Activated naive CD4-positive, alpha-beta T cell treated with anti-CD3 and anti-CD28 coated beads for 36 hours (primary cell): ENCODE measurements at regions of chr5 and their contacts with region 1.

Region 1: GRCh38 chr5:131382407-131383395 is 118.8 kb downstream of the CDC42SE2 start:
- DNase-seq: peak; percentile 61
- H3K4me3 Mint-ChIP-seq: peak overlapping the region; percentile 57
- H3K27ac Mint-ChIP-seq: peak overlapping the region; percentile 96
- H3K4me1 Mint-ChIP-seq: peaks cover 93% of the 10 kb centered on the region
- H3K27me3 Mint-ChIP-seq: no peaks in the 10 kb centered on the region

Region 2: GRCh38 chr5:131170540-131171275 is 212.0 kb before region 1 on chr5 and contains the start of gene LYRM7:
- CTCF ChIA-PET with region 1: no interaction called
- intact Hi-C with region 1: loop called (anchors 1 kb)
- DNase-seq: peak; percentile 98
- H3K4me3 Mint-ChIP-seq: peak within 1 kb of the TSS; percentile 99
- H3K27ac Mint-ChIP-seq: peak within 1 kb of the TSS; percentile 92
- H3K4me1 Mint-ChIP-seq: peaks cover 44% of the 10 kb centered on the region
- H3K27me3 Mint-ChIP-seq: no peaks in the 10 kb centered on the region
- total RNA-seq, gene LYRM7: 14.6 to 15.0 TPM

Region 3: GRCh38 chr5:131263648-131264450 is 118.9 kb before region 1 on chr5 and contains the start of gene CDC42SE2:
- CTCF ChIA-PET with region 1: interaction called, 24 read pairs
- intact Hi-C with region 1: loop called (anchors 1 kb)
- DNase-seq: peak; percentile 81
- H3K4me3 Mint-ChIP-seq: peak within 1 kb of the TSS; percentile 75
- H3K27ac Mint-ChIP-seq: peak within 1 kb of the TSS; percentile 93
- H3K4me1 Mint-ChIP-seq: peaks cover 48% of the 10 kb centered on the region
- H3K27me3 Mint-ChIP-seq: no peaks in the 10 kb centered on the region
- total RNA-seq, gene CDC42SE2: 106 to 108 TPM

Region 4: GRCh38 chr5:131289738-131290137 is 93.0 kb before region 1 on chr5:
- CTCF ChIA-PET with region 1: interaction called, 8 read pairs
- intact Hi-C with region 1: loop called (anchors 1 kb)
- DNase-seq: peak; percentile 60
- H3K4me3 Mint-ChIP-seq: peak overlapping the region; percentile 75
- H3K27ac Mint-ChIP-seq: peak overlapping the region; percentile 88
- H3K4me1 Mint-ChIP-seq: peaks cover 75% of the 10 kb centered on the region
- H3K27me3 Mint-ChIP-seq: no peaks in the 10 kb centered on the region

Region 5: GRCh38 chr5:131394128-131394527 is 11.4 kb after region 1 on chr5:
- CTCF ChIA-PET with region 1: interaction called, 10 read pairs
- intact Hi-C with region 1: loop called (anchors 1 kb)
- DNase-seq: peak; percentile 72
- H3K4me3 Mint-ChIP-seq: peak overlapping the region; percentile 67
- H3K27ac Mint-ChIP-seq: peak overlapping the region; percentile 96
- H3K4me1 Mint-ChIP-seq: peaks cover 93% of the 10 kb centered on the region
- H3K27me3 Mint-ChIP-seq: no peaks in the 10 kb centered on the region

Region 6: DNA sequence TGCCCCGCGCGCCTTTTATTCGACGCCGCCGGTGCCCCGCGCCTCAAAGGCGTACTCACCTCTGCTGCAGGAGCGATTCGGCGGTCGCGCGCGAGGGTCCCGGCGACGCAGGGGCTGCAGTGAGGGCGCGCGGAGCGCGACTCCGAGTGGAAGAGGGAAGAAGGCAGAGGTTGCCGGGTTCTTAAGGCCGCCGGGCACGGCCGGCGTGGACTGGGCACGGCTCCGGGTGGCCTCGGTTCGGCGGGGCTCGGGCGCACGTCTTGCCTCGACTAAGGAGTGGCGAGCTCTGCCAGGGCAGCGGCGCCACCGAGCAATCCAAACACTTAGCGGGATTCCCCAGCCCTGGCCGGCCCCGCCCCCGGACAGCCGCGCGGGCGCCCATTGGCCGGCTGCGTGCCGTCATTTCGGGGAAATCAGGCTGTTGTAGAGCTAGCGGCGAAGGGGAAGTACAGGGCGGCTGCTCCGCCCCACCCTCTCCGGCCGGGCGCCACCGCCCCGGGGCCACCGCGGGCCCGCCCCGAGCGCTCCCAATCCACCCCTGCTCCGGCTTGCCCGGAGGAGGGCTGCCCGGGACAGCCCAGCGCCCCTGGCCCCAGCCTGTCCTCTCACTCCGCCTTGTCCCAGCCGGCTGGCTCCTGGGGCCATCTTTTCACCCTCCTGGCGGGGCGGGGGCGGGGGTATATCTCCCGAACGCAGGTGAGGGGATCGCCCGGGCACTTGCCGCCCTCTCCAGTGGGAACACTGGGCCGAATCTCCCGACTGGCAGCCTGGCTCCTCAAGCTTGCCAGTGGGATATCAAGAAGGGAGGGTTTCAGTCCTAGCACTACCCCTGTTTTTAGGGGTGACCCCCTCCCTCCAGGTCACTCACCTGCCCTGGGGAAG is 1108.0 kb after region 1 on chr5 and contains the start of gene IRF1:
- CTCF ChIA-PET with region 1: no interaction called
- intact Hi-C with region 1: loop called (anchors 10 kb)
- DNase-seq: peak; percentile 98
- H3K4me3 Mint-ChIP-seq: peak within 1 kb of the TSS; percentile 91
- H3K27ac Mint-ChIP-seq: peak within 1 kb of the TSS; percentile 97
- H3K4me1 Mint-ChIP-seq: peaks cover 64% of the 10 kb centered on the region
- H3K27me3 Mint-ChIP-seq: no peaks in the 10 kb centered on the region
- total RNA-seq, gene IRF1: 84.3 to 88.4 TPM